ENCODE measurements at regions of chr16 and their contacts with region 1.

Region 1: GRCh38 chr16:49407873-49408550 is 34.4 kb downstream of the C16orf78 start:
- DNase-seq: peak; percentile 26 to 86
- H3K4me3 ChIP-seq: no peak overlapping the region
- H3K27ac ChIP-seq: no peak overlapping the region
- H3K4me1 ChIP-seq: no peaks in the 10 kb centered on the region
- H3K27me3 ChIP-seq: no peaks in the 10 kb centered on the region
- CTCF ChIP-seq: peak; percentile 82 to 95 (median 91)

Region 2: DNA sequence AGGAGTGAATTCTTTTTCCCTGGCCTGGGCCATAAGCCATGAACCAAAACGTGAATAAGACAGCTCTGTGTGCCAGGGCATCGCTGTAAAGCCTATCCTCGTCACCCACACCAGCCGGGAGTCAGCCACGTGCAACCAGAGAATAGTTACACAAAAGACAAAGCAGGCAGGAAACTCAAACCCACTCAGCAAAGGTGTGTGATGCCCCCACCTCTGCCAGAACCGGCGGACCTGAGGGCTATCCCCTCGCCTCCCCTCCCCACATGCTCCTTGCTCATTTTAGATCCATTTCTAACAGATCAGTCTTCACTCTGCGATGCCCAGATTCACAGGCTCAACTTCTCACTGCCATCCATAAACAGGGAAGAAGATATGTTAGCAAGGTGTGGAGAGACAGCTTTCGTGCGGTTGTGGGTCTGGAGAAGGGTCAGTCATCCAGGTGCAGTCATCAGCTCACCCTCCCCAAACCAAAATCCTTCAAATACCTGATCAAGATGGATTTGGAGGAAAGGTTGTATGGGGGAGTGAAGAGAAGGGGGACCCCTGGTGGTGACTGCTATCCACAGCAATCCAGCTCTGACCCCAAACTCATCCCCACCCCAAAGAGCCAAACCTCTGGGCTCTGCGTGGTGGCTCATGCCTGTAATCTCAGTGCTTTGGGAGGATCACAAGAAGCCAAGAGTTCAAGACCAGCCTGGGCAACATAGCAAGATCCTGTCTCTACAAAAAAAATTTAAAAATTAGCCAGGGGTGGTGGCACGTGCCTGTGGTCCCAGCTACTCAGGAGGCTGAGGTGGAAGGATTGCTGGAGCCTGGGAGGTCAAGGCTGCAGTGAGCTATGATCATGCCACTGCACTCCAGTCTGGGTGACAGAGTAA is 184.8 kb after region 1 on chr16:
- intact Hi-C with region 1: loop called (anchors 1 kb)
- DNase-seq: peak in 1 of 2 donors; percentile 63
- H3K4me3 ChIP-seq: no peak overlapping the region
- H3K27ac ChIP-seq: no peak overlapping the region
- H3K4me1 ChIP-seq: peaks cover 0 to 6% of the 10 kb centered on the region in 2 donors
- H3K27me3 ChIP-seq: no peaks in the 10 kb centered on the region
- CTCF ChIP-seq: peak; percentile 30 to 65 (median 64)

Region 3: GRCh38 chr16:49755313-49755620 is 347.3 kb after region 1 on chr16:
- intact Hi-C with region 1: loop called (anchors 2 kb)
- DNase-seq: no peak
- H3K4me3 ChIP-seq: peak overlapping the region; percentile 38 to 66
- H3K27ac ChIP-seq: no peak overlapping the region
- H3K4me1 ChIP-seq: peaks cover 0 to 5% of the 10 kb centered on the region in 2 donors
- H3K27me3 ChIP-seq: no peaks in the 10 kb centered on the region
- CTCF ChIP-seq: peak; percentile 12 to 66 (median 45)

Region 4: DNA sequence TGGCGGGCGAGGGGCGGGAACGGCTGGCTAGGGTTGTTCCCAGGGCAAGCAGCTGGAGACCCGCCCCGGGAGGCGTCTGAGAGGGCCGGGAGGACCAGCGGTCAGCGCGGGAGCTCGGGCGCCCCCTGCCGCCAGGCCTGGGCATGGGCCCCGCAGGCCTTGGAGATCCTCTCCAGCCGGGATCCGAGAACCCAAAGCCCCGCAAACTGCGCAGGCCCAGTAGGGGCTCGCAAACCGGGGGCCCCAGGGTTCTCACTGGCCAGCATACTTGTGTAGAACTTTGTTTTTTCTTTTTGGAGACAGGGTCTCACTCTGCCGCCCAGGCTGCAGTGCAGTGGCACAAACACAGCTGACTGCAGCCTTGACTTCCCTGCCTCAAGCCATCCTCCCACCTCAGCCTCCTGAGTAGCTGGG is 468.7 kb after region 1 on chr16:
- intact Hi-C with region 1: loop called (anchors 1 kb)
- DNase-seq: peak in 1 of 2 donors; percentile 84
- H3K4me3 ChIP-seq: peak overlapping the region; percentile 40 to 61
- H3K27ac ChIP-seq: no peak overlapping the region
- H3K4me1 ChIP-seq: peaks cover 2 to 8% of the 10 kb centered on the region in 2 donors
- H3K27me3 ChIP-seq: no peaks in the 10 kb centered on the region
- CTCF ChIP-seq: peak; percentile 74 to 96 (median 93)

Region 5: GRCh38 chr16:49921791-49922456 is 513.9 kb after region 1 on chr16:
- intact Hi-C with region 1: loop called (anchors 1 kb)
- DNase-seq: peak in 1 of 2 donors; percentile 67
- H3K4me3 ChIP-seq: no peak overlapping the region
- H3K27ac ChIP-seq: no peak overlapping the region
- H3K4me1 ChIP-seq: no peaks in the 10 kb centered on the region
- H3K27me3 ChIP-seq: no peaks in the 10 kb centered on the region
- CTCF ChIP-seq: peak; percentile 44 to 64 (median 57)